Naive thymus-derived CD4-positive, alpha-beta T cell (primary cell): ENCODE measurements at regions of chr12 and their contacts with region 1.

Region 1: DNA sequence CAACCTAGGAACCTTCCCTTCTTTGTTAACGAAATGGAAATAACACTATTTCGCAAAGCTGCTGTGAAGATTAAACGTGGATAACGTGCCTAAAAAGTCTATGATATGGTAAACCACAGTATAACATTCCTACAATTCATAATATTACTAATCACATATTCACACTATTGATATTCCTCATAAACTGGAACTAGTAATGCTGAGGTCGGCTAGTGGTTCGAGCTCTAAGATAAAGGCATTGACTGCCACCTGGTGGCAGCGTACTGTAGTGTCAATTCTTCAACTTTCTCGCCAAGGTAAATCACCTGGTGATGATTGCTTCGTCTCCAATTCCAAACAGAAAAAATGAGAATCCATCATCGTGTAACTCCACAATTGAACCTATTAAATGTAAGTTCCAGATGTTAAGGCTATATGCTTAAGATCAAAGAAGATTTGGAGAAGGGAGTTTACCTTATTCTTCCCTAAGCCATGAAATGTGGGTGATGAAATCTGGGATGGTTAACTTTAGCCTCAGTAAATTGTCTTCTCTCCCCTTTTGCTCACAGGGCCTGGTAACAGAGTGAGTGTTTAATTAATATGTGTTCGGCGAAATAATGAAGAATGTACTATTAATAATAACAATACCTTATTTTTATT is 197.5 kb upstream of the TMEM132C start:
- DNase-seq: no peak
- ATAC-seq: no peak
- H3K4me3 ChIP-seq: no peak overlapping the region
- H3K4me3 Mint-ChIP-seq: no peak overlapping the region
- H3K27ac ChIP-seq: no peak overlapping the region
- H3K27ac Mint-ChIP-seq: no peak overlapping the region
- H3K4me1 ChIP-seq: no peaks in the 10 kb centered on the region
- H3K4me1 Mint-ChIP-seq: no peaks in the 10 kb centered on the region
- H3K27me3 ChIP-seq: no peaks in the 10 kb centered on the region
- H3K27me3 Mint-ChIP-seq: no peaks in the 10 kb centered on the region

Region 2: DNA sequence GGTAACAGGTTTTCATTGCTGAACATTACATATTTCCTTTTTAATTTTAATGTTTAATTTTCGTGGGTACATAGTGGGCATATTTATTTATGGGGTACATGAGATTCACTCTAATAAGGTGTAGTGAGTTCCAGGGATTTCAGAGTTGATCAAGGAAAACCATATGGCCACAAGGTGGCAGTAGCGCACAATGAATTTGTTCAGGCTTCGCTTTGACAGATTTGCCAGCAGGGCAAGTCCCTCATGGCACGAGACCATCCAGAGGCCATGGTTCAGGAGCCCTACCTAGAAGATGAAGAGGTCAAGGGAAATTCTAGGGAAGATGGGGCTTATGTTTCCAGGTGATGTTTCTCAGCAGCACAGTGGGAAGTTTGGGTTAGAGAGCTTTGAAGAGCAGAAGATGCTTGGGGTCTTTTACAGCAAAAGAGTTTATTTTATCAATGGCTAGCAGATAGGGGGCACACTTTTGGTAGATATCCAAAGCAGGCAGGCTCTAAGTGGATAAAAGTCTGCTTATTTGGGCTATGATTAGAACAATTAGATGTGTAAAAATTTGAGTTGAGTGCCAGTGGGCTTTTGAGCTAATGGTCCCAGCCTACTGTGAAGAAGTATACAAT is 1999.8 kb before region 1 on chr12:
- CTCF ChIA-PET with region 1: no interaction called
- POLR2A ChIA-PET with region 1: no interaction called
- intact Hi-C with region 1: loop called in 1 of 2 experiments (anchors 5 kb)
- DNase-seq: peak in 4 of 9 donors; percentile 1 to 38 (median 9)
- ATAC-seq: no peak
- H3K4me3 ChIP-seq: no peak overlapping the region
- H3K4me3 Mint-ChIP-seq: no peak overlapping the region
- H3K27ac ChIP-seq: no peak overlapping the region
- H3K27ac Mint-ChIP-seq: no peak overlapping the region
- H3K4me1 ChIP-seq: no peaks in the 10 kb centered on the region
- H3K4me1 Mint-ChIP-seq: no peaks in the 10 kb centered on the region
- H3K27me3 ChIP-seq: no peaks in the 10 kb centered on the region
- H3K27me3 Mint-ChIP-seq: no peaks in the 10 kb centered on the region

Region 3: DNA sequence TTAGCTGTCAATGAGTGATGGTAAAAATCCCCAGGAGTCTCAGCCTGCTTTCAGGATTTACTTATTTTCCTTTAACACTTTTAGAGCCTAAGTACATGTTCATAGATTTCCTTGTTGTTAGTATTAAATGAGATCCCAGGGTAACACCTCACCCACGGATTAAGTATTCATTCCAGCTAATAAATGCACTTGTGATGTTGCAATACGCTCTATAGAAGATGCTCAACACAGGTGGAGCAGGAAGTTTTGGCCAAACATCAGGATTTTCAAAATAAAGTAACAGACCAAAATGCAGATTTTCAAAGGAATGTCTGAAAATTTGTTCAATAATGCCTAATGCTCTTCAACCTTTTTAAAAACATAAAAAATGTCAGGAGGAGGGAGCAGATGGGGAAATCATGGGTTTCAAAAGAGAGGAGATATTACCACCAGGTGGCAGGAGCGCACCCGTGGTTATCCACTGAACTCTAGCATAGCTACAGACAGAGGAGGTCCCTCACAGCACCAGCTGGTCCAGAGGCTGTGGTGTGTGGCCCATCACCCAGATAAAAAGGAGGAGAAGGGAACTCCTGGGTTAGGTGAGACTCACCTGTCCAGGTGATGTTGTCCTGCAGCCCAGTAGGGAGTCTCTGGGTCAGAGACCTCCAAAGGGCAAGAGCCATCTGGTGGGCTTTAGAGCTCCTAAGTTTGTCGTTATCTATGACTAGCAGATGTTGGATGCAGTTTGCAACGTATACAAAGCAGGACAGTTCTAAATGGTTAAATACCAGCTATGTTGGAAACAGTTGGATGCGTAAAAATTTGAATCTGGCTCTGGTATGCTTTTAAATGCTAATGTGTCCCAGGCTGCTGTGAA is 960.9 kb before region 1 on chr12:
- CTCF ChIA-PET with region 1: no interaction called
- POLR2A ChIA-PET with region 1: no interaction called
- intact Hi-C with region 1: loop called in 1 of 2 experiments (anchors 5 kb)
- DNase-seq: peak in 6 of 9 donors; percentile 7 to 35 (median 32)
- ATAC-seq: peak; percentile 45
- H3K4me3 ChIP-seq: no peak overlapping the region
- H3K4me3 Mint-ChIP-seq: no peak overlapping the region
- H3K27ac ChIP-seq: no peak overlapping the region
- H3K27ac Mint-ChIP-seq: peak overlapping the region in 1 of 9 donors; percentile 12
- H3K4me1 ChIP-seq: no peaks in the 10 kb centered on the region
- H3K4me1 Mint-ChIP-seq: no peaks in the 10 kb centered on the region
- H3K27me3 ChIP-seq: no peaks in the 10 kb centered on the region
- H3K27me3 Mint-ChIP-seq: peaks cover 5 to 56% (median 30%) of the 10 kb centered on the region in 5 donors

Region 4: GRCh38 chr12:127280393-127281275 is 788.8 kb before region 1 on chr12:
- CTCF ChIA-PET with region 1: no interaction called
- POLR2A ChIA-PET with region 1: no interaction called
- intact Hi-C with region 1: loop called in 1 of 2 experiments (anchors 5 kb)
- DNase-seq: peak in 8 of 9 donors; percentile 9 to 84 (median 34)
- ATAC-seq: peak; percentile 81
- H3K4me3 ChIP-seq: no peak overlapping the region
- H3K4me3 Mint-ChIP-seq: no peak overlapping the region
- H3K27ac ChIP-seq: no peak overlapping the region
- H3K27ac Mint-ChIP-seq: no peak overlapping the region
- H3K4me1 ChIP-seq: no peaks in the 10 kb centered on the region
- H3K4me1 Mint-ChIP-seq: peaks cover 0 to 9% (median 0%) of the 10 kb centered on the region in 7 donors
- H3K27me3 ChIP-seq: no peaks in the 10 kb centered on the region
- H3K27me3 Mint-ChIP-seq: peaks cover 0 to 19% (median 15%) of the 10 kb centered on the region in 5 donors